Activated T-helper 2 cell treated with anti-CD3 and anti-CD28 coated beads, Interferon-gamma antibody, Interleukin-2, Interleukin-4, amounts not matched to agents 10 μg/mL and 5 μg/mL and 100 μg/mL, durations not matched to agents 14 hours and 24 hours and 36 hours (primary cell): ENCODE measurements at regions of chr3 and their contacts with region 1.

Region 1: GRCh38 chr3:30347679-30348216 is 258.7 kb upstream of the TGFBR2 start:
- DNase-seq: peak; percentile 40
- H3K4me3 Mint-ChIP-seq: peak overlapping the region; percentile 24
- H3K27ac Mint-ChIP-seq: peak overlapping the region; percentile 57
- H3K4me1 Mint-ChIP-seq: peaks cover 73% of the 10 kb centered on the region
- H3K27me3 Mint-ChIP-seq: peaks cover 7% of the 10 kb centered on the region

Region 2: GRCh38 chr3:29936054-29936453 is 411.7 kb before region 1 on chr3:
- intact Hi-C with region 1: loop called (anchors 10 kb)
- DNase-seq: no peak
- H3K4me3 Mint-ChIP-seq: no peak overlapping the region
- H3K27ac Mint-ChIP-seq: peak overlapping the region; percentile 65
- H3K4me1 Mint-ChIP-seq: peaks cover 27% of the 10 kb centered on the region
- H3K27me3 Mint-ChIP-seq: peaks cover 15% of the 10 kb centered on the region

Region 3: GRCh38 chr3:30502742-30503073 is 155.0 kb after region 1 on chr3:
- intact Hi-C with region 1: loop called (anchors 10 kb)
- DNase-seq: no peak
- H3K4me3 Mint-ChIP-seq: no peak overlapping the region
- H3K27ac Mint-ChIP-seq: peak overlapping the region; percentile 42
- H3K4me1 Mint-ChIP-seq: peaks cover 24% of the 10 kb centered on the region
- H3K27me3 Mint-ChIP-seq: no peaks in the 10 kb centered on the region

Region 4: GRCh38 chr3:30596161-30596560 is 248.4 kb after region 1 on chr3:
- intact Hi-C with region 1: no loop called
- DNase-seq: no peak
- H3K4me3 Mint-ChIP-seq: no peak overlapping the region
- H3K27ac Mint-ChIP-seq: no peak overlapping the region
- H3K4me1 Mint-ChIP-seq: peaks cover 26% of the 10 kb centered on the region
- H3K27me3 Mint-ChIP-seq: no peaks in the 10 kb centered on the region

Region 5: GRCh38 chr3:30620402-30621360 is 272.9 kb after region 1 on chr3:
- intact Hi-C with region 1: loop called (anchors 2 kb)
- DNase-seq: no peak
- H3K4me3 Mint-ChIP-seq: peak overlapping the region; percentile 65
- H3K27ac Mint-ChIP-seq: peak overlapping the region; percentile 96
- H3K4me1 Mint-ChIP-seq: peaks cover 83% of the 10 kb centered on the region
- H3K27me3 Mint-ChIP-seq: no peaks in the 10 kb centered on the region

Region 6: DNA sequence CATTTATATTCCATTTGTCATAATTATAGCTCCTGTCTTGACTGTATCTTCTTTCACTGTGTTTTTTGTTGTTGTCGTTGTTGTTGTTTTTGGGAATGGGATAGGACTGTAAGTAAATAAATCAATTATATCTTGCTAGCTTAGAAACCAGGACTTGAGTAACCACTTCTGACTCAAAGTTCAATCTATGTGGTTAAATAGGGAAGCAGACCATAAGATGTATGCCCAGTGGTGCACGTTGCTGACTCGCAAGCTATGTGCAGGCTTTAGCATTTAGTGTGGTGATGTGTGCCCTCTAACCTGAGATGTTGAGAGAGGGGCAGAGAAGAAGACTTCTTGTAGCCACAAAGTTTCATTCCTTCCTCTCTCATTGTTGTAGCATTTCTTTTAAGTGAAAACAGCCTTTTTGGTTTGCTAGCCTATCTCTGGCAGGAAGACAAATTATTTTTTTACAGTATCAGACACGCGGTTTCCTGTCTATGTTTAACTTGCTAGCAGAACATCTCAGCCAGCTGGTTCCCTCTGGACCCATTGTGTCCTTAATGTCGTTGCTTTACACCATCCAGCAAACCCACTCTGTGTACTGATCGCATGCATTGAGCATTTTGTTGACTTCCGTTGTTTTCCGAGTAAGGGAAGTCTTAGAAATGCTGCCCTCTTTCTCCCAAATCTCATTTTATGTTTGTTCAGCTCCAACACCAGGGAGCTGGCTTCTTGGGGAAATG is 310.7 kb after region 1 on chr3:
- intact Hi-C with region 1: loop called (anchors 1 kb)
- DNase-seq: peak; percentile 39
- H3K4me3 Mint-ChIP-seq: peak overlapping the region; percentile 76
- H3K27ac Mint-ChIP-seq: peak overlapping the region; percentile 92
- H3K4me1 Mint-ChIP-seq: peaks cover 90% of the 10 kb centered on the region
- H3K27me3 Mint-ChIP-seq: no peaks in the 10 kb centered on the region

Region 7: DNA sequence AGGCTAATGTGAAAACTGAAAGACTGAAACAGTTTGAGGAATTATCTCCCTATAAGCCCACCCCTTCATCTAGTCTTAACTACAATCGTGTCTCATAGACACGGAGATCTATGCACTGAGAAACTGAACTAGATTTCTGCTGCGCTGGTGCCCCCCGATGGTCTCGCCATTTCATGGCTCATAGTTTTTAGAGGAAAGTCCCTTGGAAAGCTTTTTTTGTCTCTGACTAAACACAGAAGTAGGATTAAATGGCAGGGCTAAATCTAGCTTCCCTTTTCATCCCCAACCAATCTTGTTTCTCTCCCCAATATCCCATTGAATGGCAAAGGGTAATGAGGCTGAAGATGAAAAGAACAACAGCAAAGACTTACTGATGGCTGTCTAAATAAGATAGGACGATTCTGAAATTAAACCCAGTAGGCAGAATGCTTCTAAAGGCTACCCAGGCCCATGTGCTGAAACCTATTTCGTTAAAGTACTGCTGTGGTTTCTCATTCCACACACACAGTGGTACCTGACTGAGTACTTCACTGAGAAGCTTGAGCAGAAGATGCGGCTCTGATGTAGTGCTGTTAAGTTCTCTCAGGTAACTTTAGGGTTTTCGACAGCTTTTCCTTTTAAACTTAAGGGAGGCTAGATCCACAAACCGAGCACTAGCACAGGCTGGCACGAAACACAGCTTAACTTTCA is 404.0 kb after region 1 on chr3:
- intact Hi-C with region 1: loop called (anchors 5 kb)
- DNase-seq: peak; percentile 24
- H3K4me3 Mint-ChIP-seq: no peak overlapping the region
- H3K27ac Mint-ChIP-seq: no peak overlapping the region
- H3K4me1 Mint-ChIP-seq: peaks cover 38% of the 10 kb centered on the region
- H3K27me3 Mint-ChIP-seq: peaks cover 3% of the 10 kb centered on the region

Region 8: DNA sequence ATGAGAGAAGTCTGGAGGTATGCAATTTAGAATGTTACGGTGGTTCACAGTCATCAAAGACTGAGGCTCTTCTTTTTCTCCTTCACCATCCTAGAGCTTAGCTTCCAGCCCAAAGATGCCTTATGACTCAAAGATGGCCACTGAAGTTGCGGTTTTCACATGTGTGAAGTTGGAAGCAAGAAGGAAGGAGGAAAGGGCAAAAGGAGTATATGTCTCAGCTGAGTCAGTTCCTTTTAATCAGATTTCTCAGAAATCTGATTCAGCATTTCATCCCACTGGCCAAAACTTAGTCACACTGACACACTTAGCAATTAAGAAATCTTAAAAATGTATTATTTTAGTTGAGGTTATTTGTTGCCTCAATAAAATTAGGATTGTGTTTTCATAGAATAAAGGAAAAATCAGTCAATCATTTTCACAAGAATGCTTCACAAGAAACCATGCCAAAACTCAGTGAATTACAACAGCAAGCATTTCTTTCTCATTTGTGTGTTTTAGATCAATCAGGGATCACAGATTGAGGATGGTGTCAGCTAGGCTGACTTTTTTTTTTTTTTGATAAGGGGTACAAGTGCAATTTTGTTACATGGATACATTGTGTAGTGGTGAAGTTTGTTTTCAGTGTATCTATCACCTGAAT is 757.8 kb after region 1 on chr3:
- intact Hi-C with region 1: loop called (anchors 10 kb)
- DNase-seq: no peak
- H3K4me3 Mint-ChIP-seq: no peak overlapping the region
- H3K27ac Mint-ChIP-seq: no peak overlapping the region
- H3K4me1 Mint-ChIP-seq: peaks cover 42% of the 10 kb centered on the region
- H3K27me3 Mint-ChIP-seq: peaks cover 5% of the 10 kb centered on the region